ENCODE measurements at regions of chr6 and their contacts with region 1.

Region 1: DNA sequence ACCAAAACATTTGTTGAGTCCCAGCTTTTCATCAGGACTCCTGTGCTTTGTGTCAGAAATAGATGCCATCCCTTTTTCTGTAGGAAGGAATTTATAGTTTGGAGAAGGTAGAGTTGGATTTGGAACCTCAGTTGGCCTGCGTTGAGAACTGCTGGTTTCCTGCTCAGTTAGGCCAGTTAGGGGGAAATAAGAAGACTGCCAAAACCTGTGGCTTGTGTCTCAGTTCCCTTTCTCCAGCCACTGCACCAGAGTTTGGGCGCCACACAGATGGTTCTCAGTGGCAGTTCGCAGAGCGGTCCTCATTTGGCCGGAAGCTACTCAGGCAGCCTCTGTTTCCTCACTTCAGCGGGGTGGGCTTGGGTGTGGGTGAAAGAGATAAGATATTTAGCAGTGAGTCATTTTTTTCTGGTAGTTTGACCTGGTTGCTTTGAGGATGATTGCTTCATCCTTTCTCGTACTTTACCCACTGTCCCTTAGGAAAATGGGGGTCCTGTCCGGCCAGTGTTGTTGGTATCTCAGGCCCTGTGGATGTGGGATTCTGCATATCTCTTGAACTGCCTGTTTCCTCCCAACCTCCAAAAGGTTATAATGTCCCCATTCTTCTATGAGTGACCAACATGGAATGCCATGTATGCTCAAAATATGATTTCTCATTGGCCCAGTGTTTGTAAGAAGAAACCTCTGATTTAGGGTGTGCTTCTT is 53.7 kb downstream of the JARID2 start:
- DNase-seq: peak; percentile 90
- ATAC-seq: peak; percentile 65
- H3K4me3 Mint-ChIP-seq: peak overlapping the region; percentile 43
- H3K27ac Mint-ChIP-seq: peak overlapping the region; percentile 92
- H3K4me1 Mint-ChIP-seq: peaks cover 87% of the 10 kb centered on the region
- H3K27me3 Mint-ChIP-seq: no peaks in the 10 kb centered on the region

Region 2: DNA sequence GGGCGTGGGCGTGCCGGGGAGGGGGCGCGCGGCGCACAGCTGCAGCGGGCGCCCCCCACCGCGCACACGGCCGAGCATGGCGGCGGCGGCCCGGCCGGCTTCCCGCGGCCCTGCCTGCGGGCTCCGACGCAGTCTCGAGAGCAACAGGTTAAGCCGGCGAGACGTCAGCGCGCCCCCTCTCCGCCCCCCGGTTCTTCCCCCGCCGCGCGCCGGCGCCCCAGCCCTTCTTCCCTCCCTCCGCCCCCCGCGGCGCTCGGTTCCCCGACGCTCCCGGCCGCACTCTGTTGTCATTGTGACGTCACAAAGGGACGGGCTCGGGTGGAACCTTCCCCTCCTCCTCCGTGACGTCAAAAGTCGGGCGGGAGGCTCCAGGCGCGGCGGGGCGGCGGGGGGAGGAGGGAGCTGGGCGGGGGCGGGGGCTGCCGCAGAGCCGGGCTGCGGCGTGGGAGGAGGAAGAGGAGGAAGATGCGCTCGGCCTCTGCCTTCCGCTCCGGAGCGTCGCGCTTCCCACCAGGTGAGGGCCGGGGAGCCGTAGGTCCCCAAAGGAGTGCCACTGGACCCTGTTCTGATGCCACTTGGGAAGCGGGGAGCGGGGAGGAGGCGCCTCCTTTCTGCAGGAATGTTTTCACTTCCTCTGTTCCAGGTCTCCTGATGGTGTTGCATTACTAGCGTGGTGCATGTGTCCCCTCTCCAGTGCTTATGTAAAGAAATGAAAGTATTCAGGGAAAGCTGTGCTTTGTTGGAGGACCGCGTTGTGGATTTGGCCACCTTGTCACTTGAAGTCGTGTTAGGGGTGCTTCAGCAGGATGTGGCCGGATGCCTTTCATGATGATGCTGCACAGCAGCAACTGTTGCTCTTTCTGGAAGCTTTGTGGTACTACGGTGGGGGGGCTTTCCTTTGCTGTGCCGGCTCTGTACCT is 50.9 kb before region 1 on chr6:
- CTCF ChIA-PET with region 1: interaction called, 13 read pairs
- DNase-seq: peak; percentile 98
- ATAC-seq: peak; percentile 54
- H3K4me3 Mint-ChIP-seq: peak overlapping the region; percentile 96
- H3K27ac Mint-ChIP-seq: peak overlapping the region; percentile 99
- H3K4me1 Mint-ChIP-seq: peaks cover 47% of the 10 kb centered on the region
- H3K27me3 Mint-ChIP-seq: no peaks in the 10 kb centered on the region

Region 3: GRCh38 chr6:15254070-15254841 is 45.3 kb before region 1 on chr6:
- CTCF ChIA-PET with region 1: interaction called, 13 read pairs
- DNase-seq: no peak
- ATAC-seq: no peak
- H3K4me3 Mint-ChIP-seq: no peak overlapping the region
- H3K27ac Mint-ChIP-seq: peak overlapping the region; percentile 85
- H3K4me1 Mint-ChIP-seq: peaks cover 93% of the 10 kb centered on the region
- H3K27me3 Mint-ChIP-seq: no peaks in the 10 kb centered on the region